Ascending aorta (tissue), 2 donors: ENCODE measurements at regions of chr1 and their contacts with region 1.

Region 1: DNA sequence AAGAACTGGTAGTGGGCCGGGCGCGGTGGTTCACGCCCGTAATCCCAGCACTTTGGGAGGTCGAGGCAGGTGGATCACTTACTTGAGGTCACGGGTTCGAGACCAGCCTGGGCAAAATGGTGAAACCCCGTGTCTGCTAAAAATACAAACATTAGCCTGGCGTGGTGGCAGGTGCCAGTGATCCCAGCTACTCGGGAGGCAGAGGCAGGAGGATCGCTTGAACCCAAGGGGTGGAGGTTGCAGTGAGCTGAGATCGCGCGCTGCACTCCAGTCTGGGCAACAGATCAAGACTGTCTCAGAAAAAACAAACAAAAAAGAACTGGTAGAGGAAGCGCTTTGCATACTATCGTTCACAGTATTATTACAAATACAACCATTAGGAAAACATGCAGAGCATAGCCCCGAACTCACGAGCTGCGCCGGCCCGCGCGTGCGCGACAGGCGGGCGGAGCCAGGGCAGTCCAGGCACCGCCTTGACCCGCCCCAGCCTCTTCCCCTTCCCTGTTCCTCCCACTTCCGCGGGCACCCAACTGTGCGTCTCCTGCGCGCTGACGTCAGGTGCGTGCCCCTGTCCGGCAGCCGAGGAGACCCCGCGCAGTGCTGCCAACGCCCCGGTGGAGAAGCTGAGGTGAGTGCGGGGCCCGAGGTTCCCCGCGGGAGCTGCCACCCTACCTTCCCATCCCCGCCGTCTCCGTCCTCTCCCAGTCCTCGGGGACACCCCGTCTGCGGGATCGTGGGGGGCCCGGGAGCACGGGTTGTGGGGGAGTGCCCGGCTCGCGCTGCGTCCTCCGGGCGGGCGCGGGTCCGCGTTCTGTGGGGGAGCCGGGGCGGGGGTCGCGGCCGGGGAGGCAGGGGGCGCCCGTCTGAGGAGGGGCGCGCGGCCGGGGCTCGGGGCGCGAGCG is at the start of gene CDC42:
- DNase-seq: peak; percentile 88 to 98
- H3K4me3 ChIP-seq: peak within 1 kb of the TSS; percentile 93 to 100
- H3K27ac ChIP-seq: peak within 1 kb of the TSS; percentile 99
- H3K4me1 ChIP-seq: peaks cover 15 to 29% of the 10 kb centered on the region in 2 donors
- H3K27me3 ChIP-seq: no peaks in the 10 kb centered on the region
- CTCF ChIP-seq: no peak
- total RNA-seq, gene CDC42: 111 TPM

Region 2: DNA sequence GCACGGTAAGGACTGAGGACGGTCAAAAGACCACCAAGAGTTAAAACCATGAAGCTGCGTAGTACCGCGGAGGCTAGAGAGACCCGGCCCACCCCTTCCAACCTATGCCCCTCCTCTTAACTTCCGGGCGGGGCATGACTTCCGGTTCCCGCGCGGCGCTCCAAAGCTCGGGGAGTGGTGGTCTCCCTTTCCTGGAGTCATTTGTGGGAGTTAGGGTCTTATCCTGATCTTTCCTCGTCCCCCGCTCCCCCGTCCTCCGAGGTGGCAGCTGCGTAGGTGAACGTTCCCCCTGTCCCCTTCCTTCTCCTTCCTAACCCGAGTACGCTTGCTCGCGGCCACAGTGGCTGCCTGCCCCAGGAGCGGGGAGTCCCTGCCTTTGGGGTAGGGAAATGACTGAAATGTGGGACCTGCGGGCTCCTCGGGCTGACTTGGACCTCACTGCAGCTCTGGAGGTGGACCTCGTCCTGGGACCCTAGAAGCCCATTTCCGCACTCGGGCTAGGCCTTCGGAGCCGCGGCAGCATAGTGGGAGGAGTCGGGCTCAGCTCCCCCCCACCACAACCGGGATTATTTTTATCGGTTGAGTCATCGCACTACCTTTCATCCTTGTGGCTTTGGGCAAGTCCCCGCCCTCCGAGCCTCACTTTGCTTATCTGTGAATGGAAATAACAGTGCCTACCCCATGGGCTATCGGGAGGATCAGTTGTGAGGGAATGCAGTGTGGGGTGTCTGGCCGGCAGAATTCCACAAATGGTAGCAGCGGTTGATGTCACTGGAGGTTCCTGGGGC is 26.8 kb before region 1 on chr1:
- intact Hi-C with region 1: loop called (anchors 1 kb)
- DNase-seq: peak; percentile 68 to 92
- H3K4me3 ChIP-seq: peak overlapping the region; percentile 77 to 90
- H3K27ac ChIP-seq: peak overlapping the region; percentile 97 to 99
- H3K4me1 ChIP-seq: peaks cover 4 to 5% of the 10 kb centered on the region in 2 donors
- H3K27me3 ChIP-seq: no peaks in the 10 kb centered on the region
- CTCF ChIP-seq: no peak